HepG2 (cell line): ENCODE measurements at regions of chr9 and their contacts with region 1.

Region 1: GRCh38 chr9:128875790-128876160 is 6.0 kb downstream of the KYAT1 start:
- DNase-seq: peak; percentile 96
- ATAC-seq: peak; percentile 85
- H3K4me3 ChIP-seq: peak overlapping the region in 2 of 3 experiments; percentile 37 to 48; a peak in 4 of 6 replicates
- H3K27ac ChIP-seq: peak overlapping the region; percentile 95
- H3K4me1 ChIP-seq: peaks cover 68% of the 10 kb centered on the region
- H3K27me3 ChIP-seq: no peaks in the 10 kb centered on the region
- CTCF ChIP-seq: no peak
- EP300 ChIP-seq: peak; percentile 60 to 87; a peak in 3 of 4 replicates
- POLR2A ChIP-seq: peak; percentile 23 to 70; a peak in 3 of 4 replicates
- RAD21 ChIP-seq: peak; percentile 40

Region 2: DNA sequence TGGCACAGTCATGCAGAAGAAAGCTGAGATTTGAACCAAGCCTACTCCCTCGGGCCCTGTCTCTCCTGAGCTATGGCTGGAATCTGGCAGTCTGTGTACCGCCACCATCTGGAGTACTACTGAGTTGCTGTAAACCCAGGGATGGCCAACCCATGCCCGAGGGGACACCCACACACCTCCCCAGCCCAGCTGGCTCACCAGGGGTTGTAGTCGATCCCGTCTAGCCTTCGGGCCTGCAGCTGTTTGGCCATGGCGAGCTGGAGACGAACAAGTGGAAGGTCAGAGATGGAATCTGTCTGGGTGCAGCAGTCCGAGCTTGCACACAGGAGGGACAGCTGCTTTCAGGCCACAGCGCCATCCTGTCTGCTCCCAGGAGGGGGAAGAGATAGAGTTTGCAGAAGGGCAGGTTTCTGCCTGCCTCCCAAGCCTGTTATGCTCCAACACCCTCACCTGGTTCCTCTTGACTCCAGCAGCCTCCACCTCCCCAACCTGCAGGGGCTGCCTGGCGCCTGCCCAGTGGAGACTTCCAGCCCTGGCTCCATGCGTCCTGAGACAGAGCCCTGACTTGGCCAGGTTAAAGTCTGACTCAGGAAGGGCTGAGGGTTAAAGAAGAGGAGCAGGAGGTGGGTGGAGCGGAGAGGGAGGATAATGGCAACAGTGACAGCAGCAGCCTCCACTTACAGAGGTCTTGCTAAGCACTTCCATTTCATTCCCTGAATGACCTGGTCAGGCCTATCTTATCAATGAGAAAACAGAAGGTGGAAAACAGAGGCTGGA is 30.4 kb before region 1 on chr9:
- CTCF ChIA-PET with region 1: no interaction called
- POLR2A ChIA-PET with region 1: interaction called, 12 read pairs
- in situ Hi-C with region 1: no loop called
- intact Hi-C with region 1: no loop called
- DNase-seq: peak; percentile 50
- ATAC-seq: peak; percentile 87
- H3K4me3 ChIP-seq: no peak overlapping the region; a peak in 1 of 6 replicates
- H3K27ac ChIP-seq: peak overlapping the region; percentile 55
- H3K4me1 ChIP-seq: peaks cover 66% of the 10 kb centered on the region
- H3K27me3 ChIP-seq: no peaks in the 10 kb centered on the region
- CTCF ChIP-seq: peak; percentile 43
- EP300 ChIP-seq: no peak
- POLR2A ChIP-seq: no peak
- RAD21 ChIP-seq: 0 out of 2 replicates have a peak, but pooled peaks have one; percentile 17

Region 3: DNA sequence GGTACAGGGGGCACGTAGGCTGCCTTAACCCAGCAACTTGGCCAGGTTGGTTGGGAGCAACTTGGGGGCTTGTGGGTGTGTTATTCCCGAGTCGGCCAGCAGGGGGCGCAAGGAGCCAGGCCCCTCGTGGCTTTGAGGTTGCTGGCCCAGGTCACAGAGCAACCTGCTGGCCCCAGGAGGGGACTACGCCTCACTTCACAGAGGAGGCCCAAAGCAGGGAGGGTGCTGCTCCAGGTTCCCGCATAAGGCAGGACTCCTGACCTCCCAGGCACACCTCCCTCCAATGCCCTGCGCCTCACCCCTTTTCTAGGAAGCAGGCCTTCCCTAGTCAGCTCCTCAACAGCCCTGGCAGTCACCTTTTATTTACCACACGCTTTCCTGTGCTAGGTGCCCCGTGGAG is 12.1 kb before region 1 on chr9:
- CTCF ChIA-PET with region 1: interaction called, 17 read pairs
- POLR2A ChIA-PET with region 1: interaction called, 5 read pairs
- in situ Hi-C with region 1: no loop called
- intact Hi-C with region 1: loop called (anchors 2 kb)
- DNase-seq: peak; percentile 72
- ATAC-seq: peak; percentile 99
- H3K4me3 ChIP-seq: no peak overlapping the region; a peak in 1 of 6 replicates
- H3K27ac ChIP-seq: peak overlapping the region; percentile 49
- H3K4me1 ChIP-seq: peaks cover 34% of the 10 kb centered on the region
- H3K27me3 ChIP-seq: no peaks in the 10 kb centered on the region
- CTCF ChIP-seq: peak; percentile 98
- EP300 ChIP-seq: no peak
- POLR2A ChIP-seq: no peak
- RAD21 ChIP-seq: peak; percentile 99

Region 4: DNA sequence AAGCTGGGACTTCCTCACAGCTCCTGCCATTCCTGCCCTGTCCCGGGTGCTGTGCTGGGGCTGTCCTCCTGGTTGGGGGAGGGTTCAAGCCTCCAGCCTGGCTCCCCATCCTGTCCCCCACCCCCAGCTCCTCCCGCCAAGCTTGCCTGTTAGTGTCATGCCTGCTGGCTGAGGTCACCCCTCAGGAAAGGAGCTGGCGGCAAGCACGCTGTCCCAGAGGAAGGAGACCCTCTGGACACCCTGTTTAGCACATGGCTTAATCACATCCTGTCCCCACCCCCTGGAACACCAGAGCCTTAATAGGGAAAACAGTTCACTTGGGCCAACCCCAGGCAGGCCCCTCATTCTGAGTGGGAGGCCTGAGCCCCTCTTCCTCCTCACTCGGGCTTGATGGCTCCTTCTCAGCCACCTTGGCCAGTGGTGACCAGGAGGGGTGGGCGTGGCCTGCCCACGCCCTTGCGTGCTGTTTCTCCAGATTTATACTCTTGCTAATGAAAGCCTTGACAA is 35.8 kb after region 1 on chr9:
- CTCF ChIA-PET with region 1: no interaction called
- POLR2A ChIA-PET with region 1: interaction called, 14 read pairs
- in situ Hi-C with region 1: no loop called
- intact Hi-C with region 1: no loop called
- DNase-seq: peak; percentile 80
- ATAC-seq: peak; percentile 15
- H3K4me3 ChIP-seq: no peak overlapping the region
- H3K27ac ChIP-seq: peak overlapping the region; percentile 70
- H3K4me1 ChIP-seq: peaks cover 65% of the 10 kb centered on the region
- H3K27me3 ChIP-seq: no peaks in the 10 kb centered on the region
- CTCF ChIP-seq: no peak
- EP300 ChIP-seq: no peak
- POLR2A ChIP-seq: no peak
- RAD21 ChIP-seq: no peak

Region 5: GRCh38 chr9:128921881-128922763 is 46.3 kb after region 1 on chr9:
- CTCF ChIA-PET with region 1: interaction called, 6 read pairs
- POLR2A ChIA-PET with region 1: interaction called, 25 read pairs
- in situ Hi-C with region 1: loop called (anchors 5 kb)
- intact Hi-C with region 1: no loop called
- DNase-seq: peak; percentile 62
- ATAC-seq: peak; percentile 72
- H3K4me3 ChIP-seq: peak overlapping the region; percentile 75 to 94 (median 78)
- H3K27ac ChIP-seq: peak overlapping the region; percentile 79
- H3K4me1 ChIP-seq: peaks cover 62% of the 10 kb centered on the region
- H3K27me3 ChIP-seq: no peaks in the 10 kb centered on the region
- CTCF ChIP-seq: 0 out of 2 replicates have a peak, but pooled peaks have one; percentile 8
- EP300 ChIP-seq: no peak
- POLR2A ChIP-seq: peak; percentile 29 to 67; a peak in 3 of 4 replicates
- RAD21 ChIP-seq: 0 out of 2 replicates have a peak, but pooled peaks have one; percentile 15

Region 6: DNA sequence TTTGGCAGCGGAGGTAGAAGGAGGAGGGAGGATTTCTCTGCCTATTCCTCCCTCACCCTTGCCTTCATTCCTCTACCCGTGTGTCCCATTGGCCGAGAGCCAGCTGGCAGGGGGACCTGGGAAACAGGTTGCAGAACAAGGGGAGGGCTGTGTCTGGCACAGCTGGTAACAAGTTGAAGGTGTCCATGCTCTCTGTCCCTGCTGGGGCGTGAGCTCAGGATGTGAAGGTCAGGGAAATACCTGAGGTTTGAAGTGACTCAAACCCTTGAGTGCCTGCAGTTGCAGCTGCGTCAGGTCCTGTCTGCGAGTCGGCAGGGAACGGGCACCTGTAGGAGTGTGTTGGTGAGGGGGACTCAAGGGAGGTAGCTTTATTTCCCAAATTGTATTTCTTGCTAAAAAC is 176.8 kb after region 1 on chr9:
- CTCF ChIA-PET with region 1: no interaction called
- POLR2A ChIA-PET with region 1: no interaction called
- in situ Hi-C with region 1: no loop called
- intact Hi-C with region 1: no loop called
- DNase-seq: no peak
- ATAC-seq: no peak
- H3K4me3 ChIP-seq: no peak overlapping the region
- H3K27ac ChIP-seq: no peak overlapping the region
- H3K4me1 ChIP-seq: peaks cover 10% of the 10 kb centered on the region
- H3K27me3 ChIP-seq: no peaks in the 10 kb centered on the region
- CTCF ChIP-seq: no peak
- EP300 ChIP-seq: no peak
- POLR2A ChIP-seq: no peak
- RAD21 ChIP-seq: no peak

Region 7: DNA sequence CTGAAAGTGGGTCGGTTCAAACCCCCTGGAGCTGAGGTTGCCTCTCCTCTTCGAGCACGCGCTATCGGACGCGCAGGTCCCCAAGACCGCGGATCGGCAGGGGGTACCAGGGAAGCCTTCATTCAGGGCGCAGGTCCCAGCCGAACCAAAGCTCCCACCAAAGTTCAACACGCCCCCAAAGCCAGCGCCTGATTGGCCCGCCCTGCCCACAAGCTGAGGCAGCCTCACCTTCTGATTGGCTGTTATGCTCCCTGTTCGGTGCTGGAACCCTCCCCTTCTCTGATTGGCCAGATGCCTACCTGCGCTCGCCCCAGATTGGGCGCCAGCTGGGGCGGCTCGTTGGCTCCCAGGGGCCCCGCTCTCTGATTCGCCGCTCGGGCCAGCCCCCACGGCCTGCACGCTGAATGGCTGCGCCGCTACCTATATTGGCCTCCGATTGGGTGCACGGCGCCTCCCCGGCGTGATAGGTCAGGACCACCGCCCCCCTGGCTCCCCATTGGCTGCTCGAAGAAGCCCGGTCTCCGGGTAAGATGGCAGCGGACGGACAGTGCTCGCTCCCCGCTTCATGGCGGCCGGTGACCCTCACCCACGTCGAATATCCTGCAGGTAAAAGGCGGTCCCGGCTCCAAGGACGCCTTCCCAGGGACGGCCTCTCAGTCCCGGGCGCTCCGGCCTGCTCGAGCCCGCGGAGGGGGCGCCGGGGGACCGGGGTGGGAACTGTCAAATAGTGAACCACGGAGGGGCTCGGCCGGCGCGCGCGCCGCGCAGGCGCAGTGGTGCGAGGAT is 205.0 kb after region 1 on chr9 and contains the start of gene DOLPP1:
- CTCF ChIA-PET with region 1: no interaction called
- POLR2A ChIA-PET with region 1: no interaction called
- in situ Hi-C with region 1: no loop called
- intact Hi-C with region 1: no loop called
- DNase-seq: peak; percentile 97
- ATAC-seq: peak; percentile 95
- H3K4me3 ChIP-seq: peak within 1 kb of the TSS; percentile 75 to 97 (median 87)
- H3K27ac ChIP-seq: peak within 1 kb of the TSS; percentile 84
- H3K4me1 ChIP-seq: peaks cover 70% of the 10 kb centered on the region
- H3K27me3 ChIP-seq: no peaks in the 10 kb centered on the region
- CTCF ChIP-seq: no peak
- EP300 ChIP-seq: no peak
- POLR2A ChIP-seq: peak in 1 of 2 experiments; percentile 62; a peak in 2 of 4 replicates
- RAD21 ChIP-seq: 0 out of 2 replicates have a peak, but pooled peaks have one; percentile 30
- total RNA-seq, gene DOLPP1: 15.1 and 34.1 TPM in 2 replicates

Region 8: DNA sequence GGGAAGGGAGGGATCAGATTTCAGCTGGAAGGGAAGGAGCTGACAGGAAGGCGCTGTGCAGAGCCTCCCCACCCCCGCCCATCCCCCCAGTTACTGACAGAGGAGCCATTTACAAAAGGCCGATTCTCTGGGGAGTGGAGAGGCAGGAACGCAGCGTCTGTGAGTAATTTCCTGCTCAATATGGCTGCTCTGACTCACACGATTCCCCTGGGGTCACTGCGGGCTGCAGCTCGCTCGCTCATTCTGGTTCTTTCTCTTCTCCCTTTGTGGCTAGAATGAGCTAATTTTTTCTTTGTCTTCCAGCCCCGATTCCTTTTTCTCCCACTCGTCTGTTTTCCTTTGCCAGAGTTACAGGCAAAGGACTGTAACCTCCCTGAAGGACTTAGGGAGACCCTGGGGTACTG is 264.2 kb after region 1 on chr9:
- CTCF ChIA-PET with region 1: no interaction called
- POLR2A ChIA-PET with region 1: no interaction called
- in situ Hi-C with region 1: no loop called
- intact Hi-C with region 1: no loop called
- DNase-seq: peak; percentile 94
- ATAC-seq: peak; percentile 81
- H3K4me3 ChIP-seq: peak overlapping the region; percentile 57 to 75 (median 67)
- H3K27ac ChIP-seq: peak overlapping the region; percentile 98
- H3K4me1 ChIP-seq: peaks cover 51% of the 10 kb centered on the region
- H3K27me3 ChIP-seq: no peaks in the 10 kb centered on the region
- CTCF ChIP-seq: no peak
- EP300 ChIP-seq: peak in 1 of 2 experiments; percentile 63; a peak in 2 of 4 replicates
- POLR2A ChIP-seq: peak; percentile 75 to 78
- RAD21 ChIP-seq: no peak